Tibial artery (tissue), 4 donors: ENCODE measurements at regions of chr5 and their contacts with region 1.

Region 1: DNA sequence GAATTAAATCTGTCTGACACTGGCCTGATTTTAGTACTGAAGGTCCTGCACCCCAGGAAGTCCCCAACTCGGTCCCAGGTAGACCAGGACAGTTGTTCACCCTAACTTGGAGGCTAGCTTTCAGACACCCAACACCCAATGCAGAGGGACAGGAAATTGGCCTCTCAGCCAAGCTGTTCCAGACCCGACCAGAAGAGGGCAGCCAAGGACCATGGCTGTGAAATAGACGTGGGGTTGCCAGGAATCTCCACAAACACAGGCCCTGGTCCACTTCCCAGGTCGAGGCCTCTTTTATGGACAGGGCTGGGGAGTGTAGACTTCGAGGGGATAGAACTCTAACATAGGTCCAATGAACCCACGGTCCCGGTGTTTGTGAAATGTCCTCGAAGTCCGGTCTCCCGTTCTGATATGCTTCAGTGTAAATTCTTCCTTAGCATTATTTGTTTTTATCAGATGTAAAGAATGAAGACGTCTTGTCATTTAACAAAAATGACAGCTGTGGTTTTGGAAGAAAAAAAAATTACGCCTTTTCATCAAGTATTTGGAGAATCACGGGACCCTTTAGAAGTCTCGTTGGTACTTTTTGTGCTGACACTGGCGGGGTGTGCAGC is 260.3 kb upstream of the ADAMTS16 start:
- DNase-seq: peak; percentile 69 to 74
- H3K4me3 ChIP-seq: no peak overlapping the region
- H3K27ac ChIP-seq: no peak overlapping the region
- H3K4me1 ChIP-seq: no peaks in the 10 kb centered on the region
- H3K27me3 ChIP-seq: no peaks in the 10 kb centered on the region
- CTCF ChIP-seq: peak; percentile 68 to 82

Region 2: DNA sequence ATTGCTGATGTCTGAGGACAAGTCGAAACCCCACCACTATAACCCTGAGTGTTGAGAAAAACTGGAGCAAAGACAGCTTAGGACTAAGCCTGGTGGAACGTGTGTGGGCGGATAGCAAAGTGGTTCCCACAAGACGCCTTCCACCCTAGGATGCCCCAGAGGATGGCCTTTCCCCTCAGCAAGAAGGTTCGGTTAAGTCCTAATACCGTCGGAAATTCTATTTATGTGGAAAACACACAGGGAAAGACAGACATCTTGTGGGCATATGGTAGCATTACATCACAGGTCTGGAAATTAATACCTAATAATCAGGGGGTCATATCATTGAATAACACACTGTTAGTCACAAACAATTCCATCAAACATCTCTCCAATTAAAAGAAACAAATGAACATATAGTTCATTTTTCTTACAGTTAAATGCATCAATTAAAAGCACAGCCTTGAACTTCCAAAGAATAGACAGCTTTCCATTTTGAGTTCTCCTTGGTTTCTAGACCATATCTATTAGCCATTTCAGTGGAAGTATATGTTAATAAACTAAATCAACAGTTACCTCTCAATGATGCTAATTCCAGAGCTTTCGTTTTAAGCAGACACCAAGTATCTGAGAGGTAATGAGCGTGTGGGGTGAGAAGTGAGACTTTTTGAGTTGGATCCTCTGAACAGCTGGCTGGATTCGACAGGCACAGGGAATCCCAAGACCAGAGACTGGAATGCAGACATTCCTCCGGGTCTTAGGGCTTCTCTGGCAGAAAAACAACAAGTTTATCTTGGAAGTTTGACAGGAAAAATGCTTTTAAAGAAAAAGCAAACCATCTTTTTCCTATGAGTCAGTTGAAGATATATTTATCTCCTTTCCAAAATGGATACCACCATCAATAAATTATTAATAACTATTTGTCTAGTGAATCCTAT is 539.8 kb after region 1 on chr5:
- intact Hi-C with region 1: loop called (anchors 10 kb)
- DNase-seq: no peak
- H3K4me3 ChIP-seq: no peak overlapping the region
- H3K27ac ChIP-seq: no peak overlapping the region
- H3K4me1 ChIP-seq: peaks cover 0 to 29% (median 19%) of the 10 kb centered on the region in 4 donors
- H3K27me3 ChIP-seq: no peaks in the 10 kb centered on the region
- CTCF ChIP-seq: peak; percentile 77 to 79

Region 3: DNA sequence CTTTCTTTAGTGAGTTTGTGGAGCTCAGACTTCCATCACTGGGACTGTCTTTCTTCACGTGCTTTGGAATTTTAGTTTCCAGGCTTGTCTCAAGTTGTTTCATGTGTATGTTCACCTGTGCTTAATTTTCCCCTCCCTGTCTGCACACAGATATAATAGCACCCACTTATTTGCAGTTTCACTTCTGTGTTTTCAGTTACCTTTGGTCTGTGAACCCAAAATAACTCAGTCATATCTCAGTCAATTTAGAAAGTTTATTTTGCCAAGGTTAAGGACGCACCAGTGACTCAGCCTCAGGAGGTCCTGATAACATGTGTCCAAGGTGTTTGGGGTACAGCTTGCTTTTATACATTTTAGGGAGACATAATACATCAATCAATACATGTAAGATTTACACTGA is 873.0 kb after region 1 on chr5:
- intact Hi-C with region 1: no loop called
- DNase-seq: no peak
- H3K4me3 ChIP-seq: no peak overlapping the region
- H3K27ac ChIP-seq: no peak overlapping the region
- H3K4me1 ChIP-seq: no peaks in the 10 kb centered on the region
- H3K27me3 ChIP-seq: no peaks in the 10 kb centered on the region
- CTCF ChIP-seq: no peak